Activated CD4-positive, alpha-beta T cell treated with anti-CD3 and anti-CD28 coated beads, Interleukin-2, amount 10 ng/mL, durations not matched to agents 7 days and 5 days (primary cell): ENCODE measurements at regions of chr17 and their contacts with region 1.

Region 1: DNA sequence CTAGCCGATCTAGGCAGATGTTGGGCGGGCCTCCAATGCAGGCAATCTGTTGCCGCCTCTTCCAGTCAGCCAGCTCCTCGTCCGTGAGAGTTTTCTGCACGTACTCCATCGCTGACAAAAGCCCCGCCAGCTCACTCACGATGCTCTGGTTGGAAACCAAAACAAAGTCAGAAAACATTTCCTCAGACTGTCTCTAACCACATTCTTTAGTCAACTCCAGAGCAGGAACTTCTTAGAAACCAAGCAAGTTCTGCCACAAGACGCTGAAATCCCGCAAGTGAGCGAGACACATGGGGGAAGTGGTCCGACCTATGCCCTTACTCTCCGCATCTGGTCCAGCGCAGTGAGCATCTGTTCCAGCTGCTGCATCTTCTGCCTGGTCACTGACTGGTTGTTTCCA is 49.1 kb downstream of the STAT5A start:
- DNase-seq: peak; percentile 86
- H3K4me3 Mint-ChIP-seq: peak overlapping the region; percentile 54
- H3K27ac Mint-ChIP-seq: peak overlapping the region; percentile 92
- H3K4me1 Mint-ChIP-seq: peaks cover 75% of the 10 kb centered on the region
- H3K27me3 Mint-ChIP-seq: no peaks in the 10 kb centered on the region

Region 2: GRCh38 chr17:42322382-42323267 is 14.8 kb before region 1 on chr17:
- CTCF ChIA-PET with region 1: interaction called, 12 read pairs
- POLR2A ChIA-PET with region 1: no interaction called
- DNase-seq: peak; percentile 98
- H3K4me3 Mint-ChIP-seq: no peak overlapping the region
- H3K27ac Mint-ChIP-seq: peak overlapping the region; percentile 76
- H3K4me1 Mint-ChIP-seq: peaks cover 50% of the 10 kb centered on the region
- H3K27me3 Mint-ChIP-seq: no peaks in the 10 kb centered on the region

Region 3: DNA sequence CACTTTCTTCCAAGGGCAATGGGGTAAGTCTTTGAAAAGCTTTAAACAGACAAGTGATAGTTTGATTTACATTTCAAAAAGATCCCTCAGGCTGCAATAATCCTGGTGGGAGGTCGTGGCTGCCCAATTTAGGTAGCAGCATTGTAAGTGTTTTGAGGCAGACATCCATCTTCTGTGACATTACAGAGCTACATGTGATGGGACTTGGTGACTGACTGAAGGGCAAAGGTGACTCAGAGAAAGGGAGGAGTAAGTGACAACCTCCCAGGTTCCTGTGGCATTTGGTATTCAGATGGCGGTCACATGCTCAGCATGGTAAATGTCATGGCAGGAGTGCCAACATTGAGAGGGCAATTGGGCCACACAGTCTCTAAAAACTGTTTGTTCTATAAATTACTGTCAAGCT is 24.3 kb after region 1 on chr17:
- CTCF ChIA-PET with region 1: interaction called, 10 read pairs
- POLR2A ChIA-PET with region 1: interaction called, 3 read pairs
- DNase-seq: peak; percentile 40
- H3K4me3 Mint-ChIP-seq: no peak overlapping the region
- H3K27ac Mint-ChIP-seq: peak overlapping the region; percentile 78
- H3K4me1 Mint-ChIP-seq: peaks cover 66% of the 10 kb centered on the region
- H3K27me3 Mint-ChIP-seq: no peaks in the 10 kb centered on the region